Esophagus muscularis mucosa (tissue), 4 donors: ENCODE measurements at regions of chr9 and their contacts with region 1.

Region 1: DNA sequence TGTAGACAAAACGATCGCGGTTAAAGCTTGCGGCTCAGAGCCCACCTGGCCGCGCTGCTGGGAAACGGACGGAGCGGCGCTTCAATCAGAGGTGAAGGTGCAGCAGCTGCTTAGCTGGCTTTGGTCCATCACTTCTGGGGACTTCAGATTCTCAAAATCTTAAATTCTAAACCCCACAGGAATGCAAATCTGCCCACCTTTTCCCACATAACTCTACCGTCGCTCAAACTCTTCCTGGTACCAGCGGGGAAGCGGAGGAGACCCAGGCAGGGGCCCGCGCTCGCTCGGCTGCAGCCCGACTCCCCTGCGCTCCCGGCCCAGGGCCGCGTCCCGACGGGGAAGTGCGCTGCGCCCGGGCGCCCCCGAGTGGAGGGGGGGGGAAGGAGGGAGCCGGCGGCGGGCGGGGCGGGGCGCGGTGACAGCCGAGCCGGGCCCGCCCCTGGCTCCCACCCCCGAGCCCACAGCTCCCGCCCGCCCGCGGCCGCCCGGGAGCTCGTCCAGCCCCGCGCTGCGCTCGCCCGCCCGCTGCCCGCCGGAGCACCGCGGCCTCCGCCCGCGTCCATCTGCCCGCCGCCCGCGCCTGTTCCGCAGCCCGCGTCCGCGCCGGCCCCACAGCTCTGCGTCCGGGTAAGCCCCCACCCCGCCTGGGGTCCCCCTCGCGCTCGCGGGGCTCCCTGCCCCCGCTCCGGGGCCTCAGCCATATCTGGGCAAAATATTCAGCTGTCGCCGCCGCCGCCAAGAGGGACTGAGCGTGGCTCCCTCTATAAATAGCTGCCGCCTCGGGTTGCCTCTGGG is at the start of gene TMOD1:
- DNase-seq: peak; percentile 91
- H3K4me3 ChIP-seq: peak within 1 kb of the TSS; percentile 88 to 98 (median 96)
- H3K27ac ChIP-seq: peak within 1 kb of the TSS; percentile 95 to 98 (median 96)
- H3K4me1 ChIP-seq: peaks cover 30 to 46% (median 44%) of the 10 kb centered on the region in 4 donors
- H3K27me3 ChIP-seq: no peaks in the 10 kb centered on the region
- CTCF ChIP-seq: peak in 1 of 3 experiments; percentile 32
- EP300 ChIP-seq: no peak
- POLR2A ChIP-seq: no peak
- total RNA-seq, gene TMOD1: 68.4 to 97.6 (median 71.6) TPM

Region 2: GRCh38 chr9:97564291-97565175 is 63.2 kb after region 1 on chr9:
- intact Hi-C with region 1: loop called (anchors 5 kb)
- DNase-seq: no peak
- H3K4me3 ChIP-seq: no peak overlapping the region
- H3K27ac ChIP-seq: peak overlapping the region; percentile 56 to 90 (median 71)
- H3K4me1 ChIP-seq: peaks cover 30 to 58% (median 56%) of the 10 kb centered on the region in 4 donors
- H3K27me3 ChIP-seq: no peaks in the 10 kb centered on the region
- CTCF ChIP-seq: no peak
- EP300 ChIP-seq: no peak
- POLR2A ChIP-seq: no peak

Region 3: DNA sequence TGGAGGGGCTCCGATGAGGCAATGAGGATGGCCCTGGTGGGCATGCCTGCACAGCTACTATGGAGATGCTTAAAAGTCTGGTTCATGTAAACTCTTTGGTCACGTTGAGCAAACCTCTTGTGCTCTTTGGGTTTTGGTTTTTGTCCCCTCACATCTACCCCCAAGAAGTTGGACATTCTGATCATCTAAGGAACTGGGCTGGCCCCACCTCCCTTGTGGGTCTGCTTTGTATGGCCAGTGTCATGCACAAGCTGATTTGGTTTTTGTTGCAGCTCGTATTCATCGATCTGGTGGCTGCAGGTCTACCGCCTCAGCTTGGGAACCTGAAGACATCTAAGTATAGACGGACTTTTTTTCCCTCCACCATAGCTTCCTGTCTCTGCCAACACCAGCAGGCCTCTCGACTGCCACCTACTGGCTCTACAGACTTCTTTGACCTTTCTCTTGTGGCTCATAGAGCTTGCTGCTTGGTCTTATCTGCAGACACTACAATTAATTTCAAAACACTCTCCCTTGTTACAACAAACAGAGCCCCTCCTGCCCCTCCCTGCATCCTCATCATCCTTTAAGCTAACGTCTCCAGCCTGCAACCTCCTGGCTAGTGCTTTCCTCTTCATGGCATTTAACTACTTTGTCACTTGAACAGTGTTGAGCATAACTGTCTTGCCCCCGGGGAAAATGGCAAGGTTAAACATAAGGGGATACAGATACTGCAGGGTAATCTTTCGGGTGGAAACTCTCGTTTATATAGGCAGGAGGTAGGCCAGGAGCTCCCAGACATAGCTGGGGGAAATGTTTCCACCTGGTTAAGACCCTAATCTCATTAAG is 97.3 kb after region 1 on chr9:
- intact Hi-C with region 1: loop called (anchors 2 kb)
- DNase-seq: peak; percentile 95
- H3K4me3 ChIP-seq: no peak overlapping the region
- H3K27ac ChIP-seq: peak overlapping the region; percentile 69 to 74 (median 72)
- H3K4me1 ChIP-seq: peaks cover 36 to 61% (median 49%) of the 10 kb centered on the region in 4 donors
- H3K27me3 ChIP-seq: no peaks in the 10 kb centered on the region
- CTCF ChIP-seq: peak; percentile 81 to 87 (median 83)
- EP300 ChIP-seq: no peak
- POLR2A ChIP-seq: no peak